PC-9 (cell line): ENCODE measurements at regions of chr5 and their contacts with region 1.

Region 1: DNA sequence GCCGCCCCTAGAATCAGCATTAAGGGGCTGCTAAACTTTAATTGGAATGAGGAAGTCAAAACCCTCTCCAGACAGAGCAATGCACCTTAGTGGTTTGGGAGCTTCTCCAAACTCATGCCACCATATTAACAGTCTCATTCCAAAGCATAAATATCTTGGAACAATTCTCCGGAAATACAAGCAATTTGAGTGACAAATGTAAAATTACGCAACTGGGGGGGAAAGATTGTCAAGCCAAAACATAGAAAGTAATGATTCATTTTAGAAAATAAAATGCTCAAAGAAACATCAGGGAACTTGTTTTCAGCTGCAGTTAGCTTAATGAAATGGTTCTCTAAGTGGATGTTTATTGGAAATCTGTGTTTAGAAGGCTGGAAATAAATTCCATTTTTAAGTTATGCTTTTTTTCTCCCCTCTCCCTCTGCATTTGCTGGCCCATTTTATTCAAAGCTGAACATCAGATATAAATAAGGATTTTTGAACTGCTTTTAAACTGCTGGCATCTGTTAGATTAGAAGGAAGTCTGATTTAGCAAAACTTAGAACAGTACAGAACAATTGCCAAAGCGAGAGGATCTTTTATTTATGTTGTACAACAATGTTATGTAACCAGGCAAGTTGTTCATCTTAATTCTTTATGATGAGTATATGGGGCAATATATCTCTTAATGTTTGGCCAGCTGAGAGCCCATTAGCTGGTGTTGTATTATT is 551.9 kb downstream of the PRELID2 start:
- DNase-seq: no peak
- H3K4me3 ChIP-seq: no peak overlapping the region
- H3K27ac ChIP-seq: no peak overlapping the region
- H3K4me1 ChIP-seq: no peaks in the 10 kb centered on the region
- H3K27me3 ChIP-seq: no peaks in the 10 kb centered on the region
- CTCF ChIP-seq: no peak

Region 2: GRCh38 chr5:145246961-145247744 is 36.1 kb before region 1 on chr5:
- CTCF ChIA-PET with region 1: interaction called, 10 read pairs
- POLR2A ChIA-PET with region 1: no interaction called
- intact Hi-C with region 1: no loop called
- DNase-seq: peak in 1 of 2 experiments; percentile 23
- H3K4me3 ChIP-seq: no peak overlapping the region
- H3K27ac ChIP-seq: no peak overlapping the region
- H3K4me1 ChIP-seq: peaks cover 27% of the 10 kb centered on the region
- H3K27me3 ChIP-seq: no peaks in the 10 kb centered on the region
- CTCF ChIP-seq: no peak

Region 3: GRCh38 chr5:145260670-145261069 is 22.6 kb before region 1 on chr5:
- CTCF ChIA-PET with region 1: no interaction called
- POLR2A ChIA-PET with region 1: no interaction called
- intact Hi-C with region 1: no loop called
- DNase-seq: no peak
- H3K4me3 ChIP-seq: no peak overlapping the region
- H3K27ac ChIP-seq: no peak overlapping the region
- H3K4me1 ChIP-seq: no peaks in the 10 kb centered on the region
- H3K27me3 ChIP-seq: no peaks in the 10 kb centered on the region
- CTCF ChIP-seq: no peak